ENCODE measurements at regions of chr12 and their contacts with region 1.

Region 1: GRCh38 chr12:121626087-121626852 is at the start of gene ORAI1:
- DNase-seq: peak; percentile 98
- ATAC-seq: peak; percentile 61
- H3K4me3 Mint-ChIP-seq: peak within 1 kb of the TSS; percentile 94
- H3K27ac Mint-ChIP-seq: peak within 1 kb of the TSS; percentile 97
- H3K4me1 Mint-ChIP-seq: peaks cover 33% of the 10 kb centered on the region
- H3K27me3 Mint-ChIP-seq: no peaks in the 10 kb centered on the region
- CTCF ChIP-seq: no peak
- total RNA-seq, gene ORAI1: 37.0 to 38.1 TPM

Region 2: DNA sequence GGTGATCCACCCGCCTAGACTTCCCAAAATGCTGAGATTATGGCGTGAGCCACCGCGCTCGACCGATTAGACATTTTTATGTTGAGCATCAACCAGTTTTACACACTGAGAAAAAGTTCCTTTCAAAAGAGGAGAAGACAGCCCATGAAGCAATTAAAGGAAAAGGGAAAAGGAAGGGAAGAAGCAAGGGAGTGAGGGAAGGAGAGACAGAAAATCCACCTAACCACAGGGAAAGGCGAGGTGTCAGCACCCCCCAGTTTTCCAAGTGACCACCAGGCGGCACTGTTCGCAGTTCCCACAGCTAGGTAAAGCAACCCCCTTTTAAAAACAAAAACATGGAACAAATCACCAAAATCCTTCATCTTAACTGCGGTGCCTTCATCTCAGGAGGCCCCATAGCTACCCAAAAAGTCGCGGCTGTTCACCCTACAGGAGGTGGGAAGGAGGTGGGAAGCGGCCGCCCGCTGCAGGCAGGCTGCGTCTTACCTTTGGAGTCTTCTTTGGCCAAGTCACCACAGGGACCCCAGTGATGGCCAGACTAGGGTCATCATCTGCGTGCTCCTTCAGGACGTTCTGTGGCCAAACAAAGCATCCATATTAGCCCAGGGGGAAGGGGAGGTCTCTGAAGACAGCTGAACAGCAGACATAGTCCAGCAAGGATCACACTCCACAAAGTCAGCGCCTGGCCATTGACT is 132.0 kb before region 1 on chr12:
- CTCF ChIA-PET with region 1: interaction called, 22 read pairs
- POLR2A ChIA-PET with region 1: interaction called, 3 read pairs
- intact Hi-C with region 1: no loop called
- DNase-seq: peak; percentile 72
- ATAC-seq: peak; percentile 62
- H3K4me3 Mint-ChIP-seq: no peak overlapping the region
- H3K27ac Mint-ChIP-seq: no peak overlapping the region
- H3K4me1 Mint-ChIP-seq: peaks cover 18% of the 10 kb centered on the region
- H3K27me3 Mint-ChIP-seq: no peaks in the 10 kb centered on the region
- CTCF ChIP-seq: peak; percentile 90

Region 3: GRCh38 chr12:121536899-121537813 is 89.1 kb before region 1 on chr12:
- CTCF ChIA-PET with region 1: interaction called, 5 read pairs
- POLR2A ChIA-PET with region 1: interaction called, 20 read pairs
- intact Hi-C with region 1: no loop called
- DNase-seq: peak; percentile 83
- ATAC-seq: peak; percentile 51
- H3K4me3 Mint-ChIP-seq: peak overlapping the region; percentile 73
- H3K27ac Mint-ChIP-seq: peak overlapping the region; percentile 80
- H3K4me1 Mint-ChIP-seq: peaks cover 52% of the 10 kb centered on the region
- H3K27me3 Mint-ChIP-seq: no peaks in the 10 kb centered on the region
- CTCF ChIP-seq: no peak

Region 4: GRCh38 chr12:121560392-121561008 is 65.8 kb before region 1 on chr12:
- CTCF ChIA-PET with region 1: interaction called, 11 read pairs
- POLR2A ChIA-PET with region 1: interaction called, 8 read pairs
- intact Hi-C with region 1: loop called (anchors 10 kb)
- DNase-seq: no peak
- ATAC-seq: no peak
- H3K4me3 Mint-ChIP-seq: no peak overlapping the region
- H3K27ac Mint-ChIP-seq: no peak overlapping the region
- H3K4me1 Mint-ChIP-seq: peaks cover 15% of the 10 kb centered on the region
- H3K27me3 Mint-ChIP-seq: no peaks in the 10 kb centered on the region
- CTCF ChIP-seq: no peak

Region 5: DNA sequence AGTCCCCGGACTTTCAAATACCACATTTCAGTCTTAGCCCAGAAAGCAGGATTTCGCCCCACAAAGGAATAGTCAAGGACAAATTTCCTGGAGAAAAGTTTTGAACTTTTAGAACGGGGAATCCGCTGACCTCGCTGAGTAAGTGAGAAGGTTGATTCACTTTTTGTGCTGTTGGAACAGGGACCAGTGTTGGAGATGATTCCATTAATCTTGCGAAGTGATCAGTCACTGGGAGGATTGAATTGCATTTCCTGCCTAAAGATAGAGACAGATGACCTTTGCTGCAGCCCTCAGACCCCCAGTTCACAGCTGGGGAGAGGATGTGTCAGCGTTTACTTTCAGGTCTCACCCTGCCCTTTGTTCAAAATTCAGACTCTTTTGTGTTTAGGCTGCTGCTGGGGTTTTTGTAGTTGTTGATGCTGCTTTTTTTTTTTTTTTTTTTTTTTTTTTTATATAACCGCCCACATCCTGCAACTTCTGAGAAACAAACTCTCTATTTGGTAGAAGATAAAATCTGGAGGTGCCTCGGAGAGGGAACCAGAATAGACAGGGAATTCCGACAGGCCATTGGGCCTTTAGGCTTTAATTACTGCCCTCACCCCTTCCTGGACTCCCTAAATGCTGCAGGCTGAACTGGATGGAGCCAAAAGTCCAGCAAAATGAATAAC is 35.7 kb before region 1 on chr12:
- CTCF ChIA-PET with region 1: interaction called, 5 read pairs
- POLR2A ChIA-PET with region 1: interaction called, 7 read pairs
- intact Hi-C with region 1: loop called (anchors 5 kb)
- DNase-seq: peak; percentile 88
- ATAC-seq: peak; percentile 91
- H3K4me3 Mint-ChIP-seq: peak overlapping the region; percentile 73
- H3K27ac Mint-ChIP-seq: peak overlapping the region; percentile 95
- H3K4me1 Mint-ChIP-seq: peaks cover 37% of the 10 kb centered on the region
- H3K27me3 Mint-ChIP-seq: no peaks in the 10 kb centered on the region
- CTCF ChIP-seq: no peak

Region 6: GRCh38 chr12:121657305-121658008 is 31.2 kb after region 1 on chr12:
- CTCF ChIA-PET with region 1: interaction called, 5 read pairs
- POLR2A ChIA-PET with region 1: interaction called, 16 read pairs
- intact Hi-C with region 1: no loop called
- DNase-seq: peak; percentile 36
- ATAC-seq: peak; percentile 22
- H3K4me3 Mint-ChIP-seq: no peak overlapping the region
- H3K27ac Mint-ChIP-seq: peak overlapping the region; percentile 50
- H3K4me1 Mint-ChIP-seq: peaks cover 53% of the 10 kb centered on the region
- H3K27me3 Mint-ChIP-seq: no peaks in the 10 kb centered on the region
- CTCF ChIP-seq: no peak

Region 7: DNA sequence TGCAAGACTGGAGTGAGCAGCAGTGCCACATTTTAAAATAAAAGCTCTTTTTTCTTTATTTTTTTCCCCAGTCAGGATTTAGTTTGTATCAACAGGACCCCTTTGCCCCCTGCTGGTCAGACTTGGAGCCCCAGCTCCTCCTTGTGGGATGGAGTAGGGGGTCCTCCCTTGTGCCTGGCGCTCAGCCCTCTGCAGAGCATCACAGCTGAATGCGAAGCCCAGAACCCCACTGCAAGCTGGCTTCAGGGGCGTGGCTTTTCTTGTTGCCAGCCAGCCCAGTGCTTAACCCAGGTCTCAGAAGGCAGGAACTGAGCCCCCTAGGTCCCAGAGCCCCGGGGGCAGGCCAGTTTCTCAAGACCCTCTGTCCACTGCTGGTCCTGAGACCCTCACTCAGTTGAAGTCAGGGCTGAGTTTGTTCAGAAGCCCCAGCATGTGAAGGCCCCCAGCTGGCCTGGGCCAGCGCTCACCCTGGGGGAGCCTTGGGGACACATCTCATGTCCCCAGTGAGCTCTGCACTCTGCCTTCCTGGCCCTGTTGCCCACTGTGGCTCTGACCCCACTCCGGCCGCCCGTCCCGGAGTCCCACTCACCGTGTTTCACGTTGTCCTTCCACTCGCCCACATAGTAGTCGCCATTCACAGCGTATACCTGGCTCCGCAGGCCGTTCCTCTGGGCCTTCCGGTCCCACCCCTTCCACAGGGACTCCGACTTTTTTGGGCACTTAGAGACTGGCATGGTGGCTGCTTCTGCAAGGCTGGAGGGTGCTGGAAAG is 42.7 kb after region 1 on chr12:
- CTCF ChIA-PET with region 1: interaction called, 76 read pairs
- POLR2A ChIA-PET with region 1: interaction called, 25 read pairs
- intact Hi-C with region 1: loop called (anchors 5 kb)
- DNase-seq: peak; percentile 81
- ATAC-seq: no peak
- H3K4me3 Mint-ChIP-seq: no peak overlapping the region
- H3K27ac Mint-ChIP-seq: peak overlapping the region; percentile 2
- H3K4me1 Mint-ChIP-seq: peaks cover 48% of the 10 kb centered on the region
- H3K27me3 Mint-ChIP-seq: no peaks in the 10 kb centered on the region
- CTCF ChIP-seq: peak; percentile 80

Measured in activated CD8-positive, alpha-beta T cell treated with anti-CD3 and anti-CD28 coated beads for 36 hours (primary cell).